ENCODE measurements at regions of chr7 and their contacts with region 1.

Region 1: DNA sequence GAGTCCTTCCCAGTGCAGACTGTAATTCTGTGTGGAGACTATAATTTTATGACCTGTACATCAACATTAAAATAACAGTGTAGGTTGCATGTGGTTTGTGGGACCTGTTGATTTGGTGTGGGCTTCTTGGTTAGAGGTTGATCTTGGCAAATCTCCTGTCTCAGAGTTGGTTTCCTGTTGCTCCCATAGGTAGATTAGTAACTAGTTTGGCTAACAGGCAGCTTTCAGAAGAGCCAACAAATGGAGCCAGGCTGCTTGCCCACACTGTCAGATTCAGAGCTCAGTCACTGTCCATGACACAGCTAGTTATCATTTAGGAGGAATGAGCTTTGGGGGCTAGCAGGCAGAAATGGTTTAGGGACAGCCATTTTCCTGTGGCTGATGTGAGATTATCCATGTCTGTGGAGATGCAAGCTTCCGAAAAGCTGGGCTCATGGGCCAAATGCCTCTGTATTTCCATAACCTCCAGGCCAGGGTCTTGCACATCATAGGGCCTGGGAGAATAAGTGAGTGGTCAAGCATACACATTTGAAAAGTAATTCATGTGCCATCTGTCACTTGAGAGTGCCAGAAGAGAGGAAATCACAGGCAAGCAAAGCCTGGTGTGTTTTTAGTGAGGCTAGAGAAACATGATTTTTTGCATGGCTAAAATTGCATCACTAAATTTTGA is 33.4 kb downstream of the CCM2 start:
- DNase-seq: peak; percentile 80
- H3K4me3 ChIP-seq: no peak overlapping the region
- H3K27ac ChIP-seq: peak overlapping the region; percentile 65
- H3K4me1 ChIP-seq: peaks cover 33% of the 10 kb centered on the region
- H3K27me3 ChIP-seq: no peaks in the 10 kb centered on the region
- CTCF ChIP-seq: no peak

Region 2: DNA sequence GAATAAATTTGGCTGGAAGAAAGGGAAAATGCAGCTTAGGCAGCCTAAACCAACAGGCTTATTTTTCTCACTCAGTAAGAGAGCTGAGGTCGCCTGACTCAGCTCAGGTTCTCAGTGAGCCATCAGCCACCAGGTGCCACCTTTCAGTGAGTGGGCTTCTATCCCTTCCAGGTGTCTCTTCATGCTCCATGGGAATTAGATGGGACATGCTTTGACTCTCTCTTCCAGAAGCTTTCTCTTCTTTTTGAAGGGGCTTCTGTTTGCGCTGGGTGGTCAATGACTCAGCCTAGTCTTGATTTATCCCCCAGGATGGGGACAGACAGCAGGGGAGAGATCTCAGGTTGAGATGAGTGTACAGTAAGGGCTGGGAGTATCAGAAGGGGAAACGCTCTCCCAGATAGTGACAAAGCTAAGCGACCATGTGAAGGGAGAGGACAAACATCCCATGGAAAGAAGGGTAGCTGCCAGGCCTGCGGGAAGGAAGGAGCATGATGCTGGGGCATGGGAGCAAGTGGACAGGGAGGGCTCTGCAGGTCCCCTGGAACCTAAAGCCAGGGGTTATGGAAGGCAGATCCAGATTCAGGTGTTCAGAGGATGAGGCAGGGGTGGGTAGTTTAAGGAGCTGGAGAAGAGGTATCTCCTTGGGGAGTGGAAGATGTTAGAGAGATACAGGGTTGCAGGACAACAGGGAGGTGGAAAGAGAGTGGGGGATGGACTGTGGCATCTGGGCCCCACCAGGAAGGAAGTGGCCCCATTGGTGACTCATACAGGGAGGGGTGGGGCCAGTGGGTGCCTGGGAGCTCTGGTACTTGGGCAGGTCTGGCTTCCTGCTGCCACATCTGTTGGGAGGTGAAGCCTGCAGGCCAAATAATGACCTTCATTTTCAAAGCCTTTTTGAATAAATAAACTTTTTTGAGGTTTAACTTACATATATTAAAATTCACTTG is 394.5 kb before region 1 on chr7:
- CTCF ChIA-PET with region 1: no interaction called
- dilution Hi-C with region 1: no loop called
- in situ Hi-C with region 1: no loop called
- intact Hi-C with region 1: no loop called
- DNase-seq: peak; percentile 89
- H3K4me3 ChIP-seq: no peak overlapping the region
- H3K27ac ChIP-seq: peak overlapping the region; percentile 98
- H3K4me1 ChIP-seq: peaks cover 47% of the 10 kb centered on the region
- H3K27me3 ChIP-seq: no peaks in the 10 kb centered on the region
- CTCF ChIP-seq: peak in 1 of 2 donors; percentile 15

Region 3: DNA sequence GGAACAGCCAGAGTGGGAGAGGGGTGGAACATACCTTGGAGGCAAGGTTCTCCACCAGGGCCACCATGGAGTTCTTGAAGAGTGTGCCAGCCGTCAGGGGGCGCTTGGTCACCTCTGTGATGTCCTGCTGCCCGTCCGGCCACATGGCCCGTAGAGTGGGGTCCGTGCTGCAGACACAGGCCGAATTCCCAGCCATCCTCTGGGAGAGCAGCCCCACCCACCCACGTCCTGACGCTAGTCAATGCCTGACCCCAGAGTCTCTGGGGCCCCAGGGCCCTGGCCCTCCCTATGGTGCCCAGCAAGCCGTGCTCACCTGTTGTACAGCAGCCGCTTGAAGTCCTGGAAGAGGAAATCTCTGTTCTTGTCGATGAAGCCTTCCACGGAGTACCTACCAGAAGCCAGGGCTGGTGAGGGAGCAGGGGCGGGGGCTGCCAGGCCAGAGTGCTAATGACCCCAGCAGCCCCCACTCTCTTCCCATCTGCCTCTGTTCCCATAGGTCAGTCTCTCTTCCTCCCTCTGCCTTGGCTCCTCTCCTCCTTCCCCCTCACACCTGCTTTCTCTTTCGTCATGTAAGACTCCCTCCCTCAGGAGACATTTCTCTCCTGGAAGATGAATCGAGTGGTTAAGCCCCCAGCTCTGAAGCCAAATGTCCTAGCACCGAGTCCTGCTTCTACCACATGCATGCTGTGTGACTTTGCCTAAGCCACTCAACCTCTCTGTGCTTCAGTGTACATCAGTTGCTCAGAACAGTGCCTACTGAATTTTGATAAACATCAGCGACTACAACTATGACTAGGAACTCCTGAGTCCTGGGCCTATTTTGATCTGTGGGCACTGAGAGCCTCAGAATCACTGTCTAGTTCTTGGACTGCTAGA is 65.6 kb before region 1 on chr7:
- CTCF ChIA-PET with region 1: no interaction called
- dilution Hi-C with region 1: loop called (anchors 5 kb)
- in situ Hi-C with region 1: no loop called
- intact Hi-C with region 1: no loop called
- DNase-seq: no peak
- H3K4me3 ChIP-seq: no peak overlapping the region
- H3K27ac ChIP-seq: no peak overlapping the region
- H3K4me1 ChIP-seq: peaks cover 2% of the 10 kb centered on the region
- H3K27me3 ChIP-seq: no peaks in the 10 kb centered on the region
- CTCF ChIP-seq: peak in 1 of 2 donors; percentile 27

Region 4: DNA sequence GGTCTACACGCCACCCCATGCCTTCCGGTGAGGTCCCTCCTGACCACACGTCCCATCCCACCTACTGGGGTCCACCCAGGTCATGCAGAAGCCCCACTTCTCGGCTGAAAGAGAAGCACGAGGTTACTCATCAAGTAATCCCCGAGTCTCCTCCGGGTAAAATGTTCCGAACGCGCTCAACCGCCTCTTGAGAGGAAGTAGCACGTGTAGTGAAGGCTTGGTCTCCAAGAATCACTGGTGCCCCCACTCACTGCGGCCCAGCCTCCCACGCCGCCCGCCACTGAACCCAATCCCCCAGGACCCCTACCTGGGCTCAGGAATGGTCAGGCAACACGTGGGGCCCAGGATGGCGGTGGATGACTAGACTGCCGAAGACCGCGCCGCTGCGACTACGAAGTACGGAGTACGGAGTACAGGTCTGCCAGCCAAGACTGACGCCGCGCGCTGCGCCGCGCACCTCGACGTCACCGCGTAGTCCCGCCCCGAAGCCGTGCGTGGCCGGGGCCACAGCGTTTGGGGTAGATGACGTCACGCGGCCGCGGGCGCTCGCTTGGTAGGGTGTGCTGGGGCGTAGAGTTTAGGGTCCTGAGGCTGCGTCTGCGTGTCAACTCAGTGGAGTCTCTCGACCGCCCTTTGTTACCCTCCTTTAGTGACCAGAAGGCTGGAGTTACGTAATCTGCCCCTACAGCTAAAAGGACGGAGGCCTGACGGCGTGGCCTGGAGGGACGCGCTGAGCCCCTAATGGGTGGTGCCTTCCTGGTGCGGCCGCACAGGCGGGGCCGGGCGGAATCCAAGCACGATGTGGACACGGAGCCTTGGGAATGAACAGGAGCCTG is 47.0 kb before region 1 on chr7:
- CTCF ChIA-PET with region 1: no interaction called
- dilution Hi-C with region 1: no loop called
- in situ Hi-C with region 1: no loop called
- intact Hi-C with region 1: loop called (anchors 1 kb)
- DNase-seq: peak; percentile 91
- H3K4me3 ChIP-seq: peak overlapping the region; percentile 76 to 91 (median 84)
- H3K27ac ChIP-seq: peak overlapping the region; percentile 90
- H3K4me1 ChIP-seq: peaks cover 32% of the 10 kb centered on the region
- H3K27me3 ChIP-seq: no peaks in the 10 kb centered on the region
- CTCF ChIP-seq: no peak

Region 5: DNA sequence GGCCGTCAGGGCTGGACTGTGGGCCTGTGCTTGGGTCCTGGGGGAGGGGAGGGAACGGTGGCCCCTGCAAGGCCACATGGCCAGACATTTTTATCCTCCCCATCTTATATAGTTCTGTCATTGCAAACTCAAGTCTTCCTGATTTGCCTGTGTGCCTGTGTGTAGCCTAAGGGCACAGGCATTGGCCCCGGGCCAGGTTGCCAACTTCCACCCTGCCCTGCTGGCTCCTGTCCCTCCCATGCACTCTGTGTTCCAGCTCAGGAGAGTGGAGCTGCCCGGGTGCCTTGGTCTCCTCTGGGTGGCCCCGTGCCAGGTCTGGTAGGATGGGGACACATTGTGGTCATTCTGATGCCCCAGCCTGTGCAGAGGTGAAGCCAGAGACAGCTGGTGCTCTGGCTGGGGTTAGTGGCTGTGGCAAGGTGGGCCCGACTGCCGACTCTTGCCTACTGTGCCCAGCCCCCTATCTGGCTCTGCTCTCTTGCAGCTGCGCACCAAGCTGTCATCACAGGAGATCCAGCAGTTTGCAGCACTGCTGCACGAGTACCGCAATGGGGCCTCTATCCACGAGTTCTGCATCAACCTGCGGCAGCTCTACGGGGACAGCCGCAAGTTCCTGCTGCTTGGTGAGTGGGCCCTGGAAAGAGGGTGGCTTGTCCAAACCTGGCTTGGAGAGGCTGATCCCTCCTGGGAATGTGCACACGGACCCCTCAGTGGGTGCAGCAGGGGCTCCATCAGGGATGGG is 40.6 kb after region 1 on chr7:
- CTCF ChIA-PET with region 1: no interaction called
- dilution Hi-C with region 1: loop called (anchors 5 kb)
- in situ Hi-C with region 1: no loop called
- intact Hi-C with region 1: no loop called
- DNase-seq: no peak
- H3K4me3 ChIP-seq: no peak overlapping the region
- H3K27ac ChIP-seq: no peak overlapping the region
- H3K4me1 ChIP-seq: peaks cover 12% of the 10 kb centered on the region
- H3K27me3 ChIP-seq: no peaks in the 10 kb centered on the region
- CTCF ChIP-seq: no peak

Region 6: DNA sequence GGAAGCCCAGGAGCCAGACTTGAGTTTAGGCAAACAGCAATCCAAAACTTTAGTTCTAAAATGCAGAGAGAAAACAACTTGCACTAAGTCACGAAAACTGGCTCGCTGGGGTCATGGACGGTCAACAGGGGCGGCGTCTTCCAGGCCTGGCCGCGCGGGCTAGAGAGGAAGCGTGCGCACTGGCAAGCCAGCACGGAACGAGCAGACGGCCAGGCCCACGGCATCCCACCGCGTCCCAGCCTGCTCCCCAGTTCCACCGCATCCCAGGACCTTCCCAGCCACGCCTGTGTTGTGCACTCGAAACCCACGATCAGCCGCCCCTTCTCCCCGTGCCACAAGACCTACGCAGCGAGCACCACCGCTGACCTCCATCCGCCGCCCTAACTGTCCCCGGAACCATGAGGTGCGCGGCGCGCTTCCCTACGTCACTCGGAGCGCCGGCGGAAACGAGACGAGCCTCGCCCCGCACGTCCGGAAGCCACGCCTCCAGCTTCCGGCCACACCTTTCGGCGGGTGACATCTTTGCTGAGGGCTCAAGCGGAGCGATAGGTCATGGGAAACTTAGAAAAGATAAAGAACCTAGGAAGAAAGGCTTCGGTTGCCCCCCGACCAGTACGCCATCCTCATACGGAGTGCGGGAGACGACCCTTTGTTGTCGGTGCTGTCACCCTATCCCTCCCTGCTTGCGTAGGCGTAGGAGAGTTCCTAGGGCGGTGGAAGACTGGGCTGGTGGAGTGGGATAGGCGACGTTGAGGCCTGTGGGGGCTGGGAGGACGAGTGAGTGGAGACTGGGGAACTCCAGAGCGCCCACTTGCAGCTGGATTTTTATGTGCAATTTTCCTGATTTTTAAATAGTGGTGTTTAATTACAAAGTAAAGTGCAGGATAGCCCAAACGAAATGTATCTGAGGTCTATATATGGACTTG is 78.2 kb after region 1 on chr7 and contains the start of gene TBRG4:
- CTCF ChIA-PET with region 1: no interaction called
- dilution Hi-C with region 1: loop called (anchors 5 kb)
- in situ Hi-C with region 1: no loop called
- intact Hi-C with region 1: no loop called
- DNase-seq: peak; percentile 92
- H3K4me3 ChIP-seq: peak within 1 kb of the TSS; percentile 92 to 99 (median 94)
- H3K27ac ChIP-seq: peak within 1 kb of the TSS; percentile 95
- H3K4me1 ChIP-seq: peaks cover 9% of the 10 kb centered on the region
- H3K27me3 ChIP-seq: peaks cover 2% of the 10 kb centered on the region
- CTCF ChIP-seq: peak in 1 of 2 donors; percentile 14
- total RNA-seq, gene TBRG4: 68.8 to 99.4 TPM

Region 7: DNA sequence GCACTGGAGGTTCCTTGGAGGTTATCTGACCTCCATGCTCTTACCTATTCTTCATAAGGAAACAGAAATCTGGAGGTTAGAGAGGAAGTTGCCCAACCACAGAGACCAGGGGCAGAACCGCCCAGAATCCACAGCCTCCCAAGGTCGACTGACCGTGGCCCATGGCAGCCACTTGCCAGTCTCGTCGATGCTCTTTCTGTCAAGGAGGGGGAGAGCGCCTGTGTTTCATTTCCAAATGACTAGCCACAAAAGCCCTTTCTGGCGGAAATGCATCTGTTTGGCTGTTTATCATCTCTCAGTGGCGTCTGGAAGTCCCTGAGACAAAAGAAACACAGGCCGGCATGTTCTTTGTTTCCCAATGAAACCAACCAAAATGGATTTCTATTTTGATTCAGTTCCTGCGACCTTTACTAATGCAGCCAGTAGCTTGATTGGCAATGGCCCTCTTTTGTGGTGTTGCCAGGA is 127.1 kb after region 1 on chr7:
- CTCF ChIA-PET with region 1: no interaction called
- dilution Hi-C with region 1: no loop called
- in situ Hi-C with region 1: no loop called
- intact Hi-C with region 1: no loop called
- DNase-seq: no peak
- H3K4me3 ChIP-seq: no peak overlapping the region
- H3K27ac ChIP-seq: no peak overlapping the region
- H3K4me1 ChIP-seq: no peaks in the 10 kb centered on the region
- H3K27me3 ChIP-seq: peaks cover 9% of the 10 kb centered on the region
- CTCF ChIP-seq: no peak